GM23248 (cell line): ENCODE measurements at regions of chr2 and their contacts with region 1.

Region 1: GRCh38 chr2:166127217-166128155 is at the start of gene SCN1A:
- DNase-seq: peak; percentile 67
- H3K4me3 ChIP-seq: no peak within 1 kb of the TSS
- H3K27ac ChIP-seq: no peak within 1 kb of the TSS
- H3K4me1 ChIP-seq: no peaks in the 10 kb centered on the region
- H3K27me3 ChIP-seq: no peaks in the 10 kb centered on the region; the same call in 1 of the 2 replicates
- total RNA-seq, gene SCN1A: 0.13 TPM in 1 of 2 replicates, not detected in the other

Region 2: DNA sequence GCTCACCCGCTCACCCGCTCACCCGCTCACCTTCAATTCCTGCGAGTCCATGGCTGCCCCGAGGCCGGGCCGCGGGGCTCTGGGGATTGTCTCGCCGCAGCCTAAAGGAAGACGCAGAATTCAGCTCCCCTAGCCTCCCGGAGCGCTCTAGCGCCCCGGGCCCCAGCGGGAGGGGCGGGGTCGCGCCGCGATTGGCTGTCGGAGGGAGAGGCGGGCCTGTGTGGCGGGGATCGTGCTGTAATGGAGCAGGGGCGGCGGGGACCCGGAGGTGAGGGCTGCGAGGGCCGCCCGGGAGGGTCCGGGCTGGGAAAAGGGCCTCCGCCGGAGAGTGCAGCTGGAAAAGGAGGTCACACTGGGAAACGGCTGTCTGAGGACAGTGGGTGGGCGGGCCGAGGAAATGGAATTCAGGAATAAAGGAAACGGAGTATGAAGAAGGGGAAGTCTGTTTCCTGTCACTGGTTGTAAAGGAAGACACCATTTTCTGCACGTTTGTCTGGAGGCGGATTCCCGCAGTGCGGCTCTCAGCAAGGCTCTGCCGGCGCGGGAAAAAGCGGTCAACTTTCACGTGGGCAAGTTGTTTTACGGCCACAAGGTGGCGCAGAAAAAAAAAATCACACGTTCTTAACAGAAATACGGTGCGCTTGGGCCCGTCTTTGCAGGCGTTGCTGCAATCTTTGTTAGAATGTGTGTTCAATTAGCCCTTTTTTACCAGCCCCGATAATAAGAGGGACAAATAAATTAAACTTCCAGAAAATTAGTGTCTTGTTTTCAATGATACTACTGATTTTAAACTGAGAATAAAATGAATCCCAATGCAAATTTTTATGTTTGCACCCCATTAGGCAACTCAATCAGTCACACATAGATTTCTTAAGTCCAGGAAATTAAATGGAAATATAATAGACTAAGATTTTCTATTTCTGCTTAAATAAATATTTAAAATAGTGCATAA is 173.6 kb before region 1 on chr2 and contains the start of gene TTC21B:
- in situ Hi-C with region 1: loop called (anchors 10 kb)
- DNase-seq: peak; percentile 97
- H3K4me3 ChIP-seq: peak within 1 kb of the TSS; percentile 81
- H3K27ac ChIP-seq: peak within 1 kb of the TSS; percentile 77
- H3K4me1 ChIP-seq: peaks cover 8% of the 10 kb centered on the region
- H3K27me3 ChIP-seq: no peaks in the 10 kb centered on the region
- total RNA-seq, gene TTC21B: 14.9 and 15.3 TPM in 2 replicates

Region 3: GRCh38 chr2:166057370-166058164 is 69.9 kb before region 1 on chr2:
- in situ Hi-C with region 1: loop called (anchors 10 kb)
- DNase-seq: peak; percentile 58
- H3K4me3 ChIP-seq: no peak overlapping the region
- H3K27ac ChIP-seq: no peak overlapping the region
- H3K4me1 ChIP-seq: peaks cover 6% of the 10 kb centered on the region
- H3K27me3 ChIP-seq: no peaks in the 10 kb centered on the region

Region 4: GRCh38 chr2:166202778-166203177 is 75.3 kb after region 1 on chr2:
- in situ Hi-C with region 1: no loop called
- DNase-seq: no peak
- H3K4me3 ChIP-seq: no peak overlapping the region
- H3K27ac ChIP-seq: no peak overlapping the region
- H3K4me1 ChIP-seq: no peaks in the 10 kb centered on the region
- H3K27me3 ChIP-seq: no peaks in the 10 kb centered on the region